ENCODE measurements at regions of chr12 and their contacts with region 1.

Region 1: GRCh38 chr12:79444089-79444488 is 246.7 kb downstream of the PAWR start:
- DNase-seq: peak; percentile 68
- ATAC-seq: peak; percentile 89
- H3K4me3 ChIP-seq: no peak overlapping the region
- H3K27ac ChIP-seq: no peak overlapping the region
- H3K4me1 ChIP-seq: no peaks in the 10 kb centered on the region; the same call in 1 of the 2 replicates
- H3K27me3 ChIP-seq: no peaks in the 10 kb centered on the region
- CTCF ChIP-seq: no peak
- POLR2A ChIP-seq: no peak
- RAD21 ChIP-seq: no peak

Region 2: DNA sequence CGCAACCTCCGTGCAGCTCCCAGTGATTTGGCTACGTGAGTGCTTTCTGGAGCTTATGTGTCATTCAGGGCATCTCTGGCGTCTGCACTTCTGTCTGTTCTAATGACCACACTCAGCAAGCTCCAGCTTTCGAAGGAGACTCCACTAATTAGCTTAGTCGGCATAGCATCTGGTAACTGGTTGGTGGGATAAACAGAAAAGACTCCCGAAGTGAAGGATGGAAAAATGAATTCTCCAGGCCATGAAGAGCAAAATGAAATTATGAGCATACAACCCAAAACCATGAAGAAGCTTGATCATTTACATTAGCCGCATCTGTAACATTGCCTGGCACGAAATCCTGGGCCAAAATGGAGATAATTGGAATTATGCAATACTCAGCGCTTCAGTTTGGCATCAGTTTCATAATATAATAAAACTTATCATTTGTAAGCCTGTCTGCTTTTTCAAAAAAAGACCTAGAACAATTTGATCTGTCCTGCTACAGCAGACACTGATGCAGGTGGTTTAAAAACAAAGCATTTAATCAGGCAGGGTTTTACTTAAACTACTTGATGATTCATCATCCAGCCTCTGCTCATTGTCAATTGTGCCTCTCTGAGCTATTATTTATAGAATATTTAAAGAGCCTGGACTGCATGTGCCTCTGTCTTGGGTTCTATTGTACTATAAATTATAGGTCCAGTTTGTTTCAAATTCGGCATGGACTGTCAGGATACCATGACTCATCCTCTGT is 492.1 kb before region 1 on chr12:
- CTCF ChIA-PET with region 1: no interaction called
- POLR2A ChIA-PET with region 1: no interaction called
- dilution Hi-C with region 1: no loop called
- in situ Hi-C with region 1: no loop called
- intact Hi-C with region 1: no loop called
- DNase-seq: no peak
- ATAC-seq: no peak
- H3K4me3 ChIP-seq: no peak overlapping the region
- H3K27ac ChIP-seq: no peak overlapping the region
- H3K4me1 ChIP-seq: no peaks in the 10 kb centered on the region
- H3K27me3 ChIP-seq: no peaks in the 10 kb centered on the region
- CTCF ChIP-seq: no peak
- POLR2A ChIP-seq: no peak
- RAD21 ChIP-seq: no peak

Region 3: DNA sequence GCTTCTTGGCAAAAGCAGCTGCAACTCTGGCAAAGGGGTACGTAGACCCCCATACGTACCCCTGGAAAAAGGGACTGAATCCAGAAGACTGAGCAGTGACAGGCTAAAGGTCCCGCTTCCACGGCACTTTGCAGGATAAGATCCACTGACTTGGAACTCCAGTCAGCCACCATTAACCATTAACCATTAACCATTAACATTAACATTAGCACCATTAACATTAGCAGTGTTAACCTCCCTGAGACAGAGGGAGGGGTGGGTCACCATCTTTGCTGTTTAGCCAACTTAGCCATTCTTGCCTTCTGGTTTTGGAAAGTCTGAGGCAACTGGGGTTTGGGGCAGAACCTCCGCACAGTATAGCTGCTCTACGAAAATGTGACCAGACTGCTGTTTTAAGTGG is 59.2 kb after region 1 on chr12:
- CTCF ChIA-PET with region 1: no interaction called
- POLR2A ChIA-PET with region 1: no interaction called
- dilution Hi-C with region 1: no loop called
- in situ Hi-C with region 1: no loop called
- intact Hi-C with region 1: no loop called
- DNase-seq: no peak
- ATAC-seq: no peak
- H3K4me3 ChIP-seq: no peak overlapping the region
- H3K27ac ChIP-seq: no peak overlapping the region
- H3K4me1 ChIP-seq: no peaks in the 10 kb centered on the region
- H3K27me3 ChIP-seq: no peaks in the 10 kb centered on the region
- CTCF ChIP-seq: no peak
- POLR2A ChIP-seq: no peak
- RAD21 ChIP-seq: no peak

Region 4: GRCh38 chr12:79535751-79536150 is 91.7 kb after region 1 on chr12:
- CTCF ChIA-PET with region 1: no interaction called
- POLR2A ChIA-PET with region 1: interaction called, 3 read pairs
- dilution Hi-C with region 1: no loop called
- in situ Hi-C with region 1: loop called (anchors 5 kb)
- intact Hi-C with region 1: no loop called
- DNase-seq: no peak
- ATAC-seq: no peak
- H3K4me3 ChIP-seq: no peak overlapping the region
- H3K27ac ChIP-seq: no peak overlapping the region
- H3K4me1 ChIP-seq: peaks cover 5% of the 10 kb centered on the region
- H3K27me3 ChIP-seq: no peaks in the 10 kb centered on the region
- CTCF ChIP-seq: no peak
- POLR2A ChIP-seq: no peak
- RAD21 ChIP-seq: no peak